Endothelial cell of umbilical vein (primary cell): ENCODE measurements at regions of chr10 and their contacts with region 1.

Region 1: GRCh38 chr10:5548527-5549223 is 23.9 kb downstream of the CALML3 start:
- DNase-seq: peak; percentile 89
- H3K4me3 ChIP-seq: no peak overlapping the region
- H3K27ac ChIP-seq: peak overlapping the region; percentile 93
- H3K4me1 ChIP-seq: peaks cover 48% of the 10 kb centered on the region
- H3K27me3 ChIP-seq: no peaks in the 10 kb centered on the region
- CTCF ChIP-seq: no peak
- POLR2A ChIP-seq: peak; percentile 5

Region 2: DNA sequence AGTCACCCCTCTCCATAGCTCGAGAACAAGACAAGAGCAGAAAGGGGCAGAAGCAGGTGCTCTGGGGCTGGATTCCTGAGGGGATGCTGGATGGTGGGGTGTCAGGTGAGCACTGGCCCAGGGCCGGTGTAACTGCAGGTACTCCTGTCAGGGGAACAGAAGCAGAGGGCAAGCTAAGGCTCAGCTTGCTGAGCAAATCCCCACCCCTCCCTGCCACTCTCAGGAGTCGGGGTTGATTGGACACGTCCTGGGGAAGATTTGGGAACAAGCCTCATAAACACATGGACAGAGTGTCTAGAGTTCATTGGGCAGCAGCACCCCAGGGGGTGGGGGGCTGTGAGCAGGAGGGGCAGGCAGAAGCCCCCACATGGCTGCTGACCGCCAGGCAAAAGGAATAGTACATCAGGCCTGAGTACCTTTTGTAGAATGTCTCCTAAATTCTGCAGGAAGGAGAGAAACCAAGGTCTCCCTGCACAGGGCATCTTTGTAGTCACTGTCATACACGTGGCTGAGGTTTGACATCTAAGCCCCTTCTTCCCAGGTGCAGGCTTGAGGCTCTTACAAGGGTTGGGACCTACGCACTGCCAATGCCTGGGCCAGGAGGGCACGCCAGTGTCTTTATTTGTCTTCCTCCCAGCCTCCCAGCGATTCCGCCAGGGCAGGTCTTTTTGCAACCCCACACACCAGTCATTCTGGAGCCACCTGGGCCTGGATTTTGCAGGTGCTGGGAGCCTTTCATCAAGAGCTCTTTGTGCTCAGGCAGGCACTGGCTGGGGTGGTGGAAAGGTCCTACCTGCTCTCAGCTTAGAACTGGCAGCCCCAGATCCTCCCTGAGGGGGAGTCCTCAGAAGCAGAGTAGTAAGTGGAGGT is 21.1 kb before region 1 on chr10:
- CTCF ChIA-PET with region 1: no interaction called
- POLR2A ChIA-PET with region 1: no interaction called
- dilution Hi-C with region 1: no loop called
- intact Hi-C with region 1: no loop called
- DNase-seq: no peak
- H3K4me3 ChIP-seq: no peak overlapping the region
- H3K27ac ChIP-seq: no peak overlapping the region
- H3K4me1 ChIP-seq: no peaks in the 10 kb centered on the region
- H3K27me3 ChIP-seq: no peaks in the 10 kb centered on the region
- CTCF ChIP-seq: no peak
- POLR2A ChIP-seq: no peak

Region 3: GRCh38 chr10:5559642-5560141 is 11.0 kb after region 1 on chr10:
- CTCF ChIA-PET with region 1: interaction called, 21 read pairs
- POLR2A ChIA-PET with region 1: no interaction called
- dilution Hi-C with region 1: no loop called
- intact Hi-C with region 1: no loop called
- DNase-seq: peak; percentile 57
- H3K4me3 ChIP-seq: no peak overlapping the region
- H3K27ac ChIP-seq: peak overlapping the region; percentile 10
- H3K4me1 ChIP-seq: peaks cover 16% of the 10 kb centered on the region
- H3K27me3 ChIP-seq: no peaks in the 10 kb centered on the region
- CTCF ChIP-seq: no peak
- POLR2A ChIP-seq: no peak

Region 4: GRCh38 chr10:5595591-5596590 is 47.2 kb after region 1 on chr10:
- CTCF ChIA-PET with region 1: interaction called, 6 read pairs
- POLR2A ChIA-PET with region 1: interaction called, 3 read pairs
- dilution Hi-C with region 1: no loop called
- intact Hi-C with region 1: loop called (anchors 1 kb)
- DNase-seq: peak; percentile 92
- H3K4me3 ChIP-seq: no peak overlapping the region
- H3K27ac ChIP-seq: peak overlapping the region; percentile 67
- H3K4me1 ChIP-seq: peaks cover 29% of the 10 kb centered on the region
- H3K27me3 ChIP-seq: no peaks in the 10 kb centered on the region
- CTCF ChIP-seq: no peak
- POLR2A ChIP-seq: peak; percentile 59

Region 5: GRCh38 chr10:5723692-5724091 is 175.0 kb after region 1 on chr10:
- CTCF ChIA-PET with region 1: no interaction called
- POLR2A ChIA-PET with region 1: no interaction called
- dilution Hi-C with region 1: no loop called
- intact Hi-C with region 1: no loop called
- DNase-seq: no peak
- H3K4me3 ChIP-seq: no peak overlapping the region
- H3K27ac ChIP-seq: no peak overlapping the region
- H3K4me1 ChIP-seq: no peaks in the 10 kb centered on the region
- H3K27me3 ChIP-seq: no peaks in the 10 kb centered on the region
- CTCF ChIP-seq: no peak
- POLR2A ChIP-seq: no peak